ENCODE measurements at regions of chr10 and their contacts with region 1.

Region 1: DNA sequence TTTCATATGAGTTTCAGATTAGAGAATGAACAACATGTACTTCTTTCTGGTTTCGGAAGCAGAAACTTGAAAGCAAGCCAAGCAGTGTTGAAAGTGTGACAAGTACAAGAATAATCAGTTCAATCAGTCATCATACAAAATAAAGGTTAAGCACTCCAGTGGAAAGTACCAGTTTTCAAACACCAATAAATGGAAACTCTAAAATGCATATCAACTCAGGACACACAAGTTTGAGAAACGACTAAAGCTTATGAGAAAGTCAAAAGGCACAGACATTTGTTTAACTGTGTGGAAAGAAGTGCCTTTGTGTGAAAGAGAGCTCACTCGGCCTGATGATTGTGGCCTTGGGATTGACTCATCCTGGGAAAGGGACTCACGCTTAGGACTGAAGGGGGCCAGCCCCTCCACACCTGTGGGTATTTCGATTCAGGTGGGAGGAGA is 60.6 kb upstream of the AKR1C1 start:
- DNase-seq: peak in 1 of 3 donors; percentile 37
- ATAC-seq: peak; percentile 86 to 87
- H3K4me3 ChIP-seq: no peak overlapping the region
- H3K27ac ChIP-seq: peak overlapping the region; percentile 86
- H3K4me1 ChIP-seq: peaks cover 7% of the 10 kb centered on the region
- H3K27me3 ChIP-seq: no peaks in the 10 kb centered on the region

Region 2: GRCh38 chr10:4867520-4868356 is 34.9 kb before region 1 on chr10:
- intact Hi-C with region 1: loop called in 1 of 4 experiments (anchors 5 kb)
- DNase-seq: peak in 2 of 3 donors; percentile 63 to 79
- ATAC-seq: peak; percentile 97
- H3K4me3 ChIP-seq: no peak overlapping the region
- H3K27ac ChIP-seq: peak overlapping the region; percentile 61
- H3K4me1 ChIP-seq: peaks cover 2% of the 10 kb centered on the region
- H3K27me3 ChIP-seq: no peaks in the 10 kb centered on the region

Region 3: GRCh38 chr10:5071411-5072198 is 169.0 kb after region 1 on chr10:
- intact Hi-C with region 1: no loop called
- DNase-seq: peak; percentile 71 to 73 (median 72)
- ATAC-seq: peak; percentile 98
- H3K4me3 ChIP-seq: no peak overlapping the region
- H3K27ac ChIP-seq: peak overlapping the region; percentile 89
- H3K4me1 ChIP-seq: peaks cover 3% of the 10 kb centered on the region
- H3K27me3 ChIP-seq: no peaks in the 10 kb centered on the region

Measured in right cardiac atrium (tissue), 5 donors.